Panc1 (cell line): ENCODE measurements at regions of chr18 and their contacts with region 1.

Region 1: GRCh38 chr18:3593904-3594661 is 144.1 kb downstream of the TGIF1 start:
- DNase-seq: peak; percentile 95
- ATAC-seq: peak; percentile 82
- H3K4me3 ChIP-seq: peak overlapping the region; percentile 50 to 86
- H3K27ac ChIP-seq: peak overlapping the region; percentile 96
- H3K4me1 ChIP-seq: peaks cover 73% of the 10 kb centered on the region
- H3K27me3 ChIP-seq: no peaks in the 10 kb centered on the region
- CTCF ChIP-seq: peak; percentile 96

Region 2: GRCh38 chr18:3261371-3262246 is 332.5 kb before region 1 on chr18 and contains the start of gene MYL12B:
- CTCF ChIA-PET with region 1: no interaction called
- POLR2A ChIA-PET with region 1: no interaction called
- in situ Hi-C with region 1: no loop called
- intact Hi-C with region 1: loop called (anchors 5 kb)
- DNase-seq: no peak
- ATAC-seq: peak; percentile 88
- H3K4me3 ChIP-seq: peak within 1 kb of the TSS; percentile 90 to 97
- H3K27ac ChIP-seq: peak within 1 kb of the TSS; percentile 100
- H3K4me1 ChIP-seq: peaks cover 45% of the 10 kb centered on the region
- H3K27me3 ChIP-seq: no peaks in the 10 kb centered on the region
- CTCF ChIP-seq: no peak
- total RNA-seq, gene MYL12B: 420 TPM

Region 3: GRCh38 chr18:3409811-3410210 is 184.3 kb before region 1 on chr18:
- CTCF ChIA-PET with region 1: no interaction called
- POLR2A ChIA-PET with region 1: interaction called, 19 read pairs
- in situ Hi-C with region 1: no loop called
- intact Hi-C with region 1: no loop called
- DNase-seq: no peak
- ATAC-seq: peak; percentile 30
- H3K4me3 ChIP-seq: no peak overlapping the region
- H3K27ac ChIP-seq: peak overlapping the region; percentile 93
- H3K4me1 ChIP-seq: peaks cover 36% of the 10 kb centered on the region
- H3K27me3 ChIP-seq: no peaks in the 10 kb centered on the region
- CTCF ChIP-seq: no peak

Region 4: DNA sequence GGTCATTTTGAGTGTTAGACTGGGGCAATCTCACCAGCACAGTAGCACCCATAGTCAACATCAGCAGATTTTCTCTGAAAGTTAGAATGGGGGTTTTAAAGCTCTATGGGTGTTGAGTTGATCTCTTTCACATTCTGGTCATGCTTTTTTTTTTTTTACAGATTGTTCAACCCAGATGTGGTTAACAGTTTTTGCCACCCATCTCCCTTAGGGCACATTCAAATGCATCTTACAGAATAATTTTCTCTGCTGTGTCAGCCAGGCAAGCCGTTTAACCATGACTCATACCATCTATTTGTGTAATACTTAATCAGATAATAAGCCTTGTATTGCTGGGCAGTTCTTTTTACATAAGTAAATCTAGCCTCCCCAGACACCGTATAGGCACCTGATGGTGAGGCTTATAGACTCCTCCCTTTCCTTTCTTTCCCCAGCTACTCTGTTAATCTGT is 82.1 kb before region 1 on chr18:
- CTCF ChIA-PET with region 1: interaction called, 11 read pairs
- POLR2A ChIA-PET with region 1: no interaction called
- in situ Hi-C with region 1: no loop called
- intact Hi-C with region 1: loop called (anchors 5 kb)
- DNase-seq: no peak
- ATAC-seq: peak; percentile 82
- H3K4me3 ChIP-seq: no peak overlapping the region
- H3K27ac ChIP-seq: peak overlapping the region; percentile 100
- H3K4me1 ChIP-seq: peaks cover 65% of the 10 kb centered on the region
- H3K27me3 ChIP-seq: no peaks in the 10 kb centered on the region
- CTCF ChIP-seq: no peak

Region 5: DNA sequence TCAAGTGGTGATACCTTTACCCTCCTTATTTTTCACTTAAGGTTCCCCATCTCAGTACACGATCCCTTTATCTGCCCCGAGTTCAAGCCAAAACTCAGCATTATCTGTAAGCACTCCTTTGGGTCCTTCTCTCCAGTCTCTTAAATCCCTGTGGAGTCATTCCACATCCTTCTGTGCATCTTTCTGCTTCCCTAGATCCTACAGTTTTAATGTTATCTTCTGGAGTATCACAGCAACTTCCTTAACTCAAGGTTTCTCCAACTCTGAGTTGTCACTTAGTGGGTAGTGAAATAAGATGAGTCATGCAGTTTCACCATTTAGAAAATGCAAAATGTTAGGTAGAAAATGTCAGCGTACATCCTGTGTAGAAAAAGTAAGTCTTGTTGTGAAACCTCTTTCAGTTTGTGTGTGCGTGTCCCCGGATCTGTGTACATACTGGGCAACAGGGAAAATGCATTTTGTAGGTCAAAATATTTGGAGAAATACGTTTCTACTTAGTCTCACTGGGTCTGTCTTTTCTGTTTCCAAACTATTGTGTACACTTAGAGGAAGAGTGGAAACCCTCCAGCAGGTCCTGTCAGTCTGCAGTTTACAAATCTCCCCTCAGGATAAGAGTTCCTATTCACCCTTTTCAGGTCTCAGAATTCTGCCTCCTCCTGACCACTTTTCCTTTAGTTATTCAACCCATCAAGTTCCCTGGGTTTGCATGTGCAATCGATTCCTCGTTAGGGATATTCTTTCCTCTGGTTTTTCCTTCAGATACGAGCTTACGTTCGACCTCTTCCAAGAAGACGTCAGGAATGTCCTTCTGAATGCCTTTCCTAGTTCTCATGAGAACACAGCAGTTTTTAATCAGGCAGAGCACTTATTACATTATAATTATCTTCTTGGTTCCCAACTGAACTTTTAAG is 10.7 kb after region 1 on chr18:
- CTCF ChIA-PET with region 1: interaction called, 12 read pairs
- POLR2A ChIA-PET with region 1: interaction called, 12 read pairs
- in situ Hi-C with region 1: no loop called
- intact Hi-C with region 1: no loop called
- DNase-seq: peak; percentile 81
- ATAC-seq: peak; percentile 2; the same call in 1 of the 2 replicates
- H3K4me3 ChIP-seq: peak overlapping the region; percentile 57 to 72
- H3K27ac ChIP-seq: peak overlapping the region; percentile 100
- H3K4me1 ChIP-seq: peaks cover 51% of the 10 kb centered on the region
- H3K27me3 ChIP-seq: no peaks in the 10 kb centered on the region
- CTCF ChIP-seq: no peak